ENCODE measurements at regions of chr12 and their contacts with region 1.

Region 1: DNA sequence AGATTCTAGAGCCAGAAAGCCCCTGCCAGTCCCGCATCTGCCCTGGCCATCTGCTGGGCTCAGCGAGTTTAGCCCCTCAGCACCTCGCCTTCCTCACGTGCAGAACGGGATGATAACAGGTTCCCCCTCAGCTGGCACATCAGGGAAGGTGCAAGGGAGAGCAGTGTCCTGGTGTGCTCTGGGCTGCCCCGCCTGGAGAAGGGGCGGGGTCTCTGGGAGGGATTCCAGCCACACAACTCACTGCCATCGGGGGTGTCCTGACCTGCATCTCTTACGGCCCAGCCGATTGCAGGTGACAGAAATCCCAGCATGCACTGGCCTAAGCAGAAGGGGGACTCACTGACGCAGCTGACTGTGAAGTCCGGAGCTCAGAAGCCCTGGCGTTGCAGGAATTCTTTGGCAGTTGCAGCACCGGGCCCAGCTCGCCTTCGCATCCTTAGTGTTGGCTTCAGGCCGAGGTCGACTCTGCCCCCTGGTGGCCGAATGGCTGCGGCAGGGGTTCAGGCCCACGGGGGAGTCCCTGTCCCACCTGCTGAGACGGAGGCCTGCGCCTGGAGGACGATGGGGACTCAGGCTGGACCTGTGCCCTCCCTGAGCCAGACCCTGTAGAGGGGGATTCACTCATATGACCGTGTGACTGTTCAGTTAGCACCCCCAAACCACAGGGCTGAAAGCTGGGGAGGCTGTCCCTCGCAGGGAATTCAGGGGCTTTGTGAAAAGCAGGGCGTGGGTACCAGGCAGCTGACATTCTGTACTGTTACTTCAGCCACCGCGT is 178.6 kb downstream of the ADGRD1 start:
- DNase-seq: peak; percentile 80
- H3K4me3 Mint-ChIP-seq: no peak overlapping the region
- H3K27ac Mint-ChIP-seq: no peak overlapping the region
- H3K4me1 Mint-ChIP-seq: no peaks in the 10 kb centered on the region
- H3K27me3 Mint-ChIP-seq: peaks cover 2% of the 10 kb centered on the region

Region 2: DNA sequence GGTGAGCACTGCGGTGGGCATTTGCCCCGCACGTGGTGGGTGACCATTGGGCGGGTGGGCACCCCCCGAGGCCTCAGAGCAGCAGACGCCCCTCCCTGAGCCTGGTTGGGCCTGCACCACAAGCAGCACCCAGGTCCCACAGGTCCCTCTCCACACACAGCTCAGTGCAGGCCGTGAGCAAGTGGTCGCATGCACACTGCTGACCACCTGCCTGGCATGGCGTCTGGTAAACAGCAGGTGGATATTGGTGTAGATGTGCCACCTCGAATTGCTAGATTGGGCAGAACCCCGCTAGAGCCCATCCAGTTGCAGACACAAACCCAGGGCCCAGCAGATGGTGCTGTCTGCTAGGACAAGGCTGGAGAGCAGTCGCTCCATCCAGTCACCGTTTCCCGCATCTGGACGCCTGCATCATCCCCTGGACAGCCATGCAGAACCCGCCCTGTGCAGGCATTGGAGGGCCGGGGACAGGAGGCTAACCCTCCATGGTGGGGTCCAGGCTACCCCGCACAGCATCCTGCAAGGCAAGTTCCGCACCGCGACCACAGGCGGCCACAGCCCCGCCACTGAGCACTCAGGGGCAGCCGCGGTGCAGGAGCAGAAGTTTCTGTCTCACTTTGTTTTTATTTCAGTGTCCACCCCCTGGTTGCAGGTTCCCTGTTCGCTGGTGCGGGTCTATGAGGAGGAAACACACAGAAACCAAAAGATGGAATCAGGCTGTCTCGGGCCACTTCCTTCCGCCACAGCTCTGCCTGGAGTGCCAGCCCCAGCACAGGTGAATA is 370.6 kb before region 1 on chr12:
- CTCF ChIA-PET with region 1: interaction called, 6 read pairs
- POLR2A ChIA-PET with region 1: no interaction called
- intact Hi-C with region 1: loop called (anchors 2 kb)
- DNase-seq: peak; percentile 79
- H3K4me3 Mint-ChIP-seq: peak overlapping the region; percentile 66
- H3K27ac Mint-ChIP-seq: no peak overlapping the region
- H3K4me1 Mint-ChIP-seq: peaks cover 3% of the 10 kb centered on the region
- H3K27me3 Mint-ChIP-seq: peaks cover 4% of the 10 kb centered on the region

Region 3: GRCh38 chr12:130826149-130826801 is 306.0 kb before region 1 on chr12:
- CTCF ChIA-PET with region 1: interaction called, 19 read pairs
- POLR2A ChIA-PET with region 1: no interaction called
- intact Hi-C with region 1: no loop called
- DNase-seq: peak; percentile 82
- H3K4me3 Mint-ChIP-seq: no peak overlapping the region
- H3K27ac Mint-ChIP-seq: no peak overlapping the region
- H3K4me1 Mint-ChIP-seq: peaks cover 13% of the 10 kb centered on the region
- H3K27me3 Mint-ChIP-seq: no peaks in the 10 kb centered on the region

Region 4: DNA sequence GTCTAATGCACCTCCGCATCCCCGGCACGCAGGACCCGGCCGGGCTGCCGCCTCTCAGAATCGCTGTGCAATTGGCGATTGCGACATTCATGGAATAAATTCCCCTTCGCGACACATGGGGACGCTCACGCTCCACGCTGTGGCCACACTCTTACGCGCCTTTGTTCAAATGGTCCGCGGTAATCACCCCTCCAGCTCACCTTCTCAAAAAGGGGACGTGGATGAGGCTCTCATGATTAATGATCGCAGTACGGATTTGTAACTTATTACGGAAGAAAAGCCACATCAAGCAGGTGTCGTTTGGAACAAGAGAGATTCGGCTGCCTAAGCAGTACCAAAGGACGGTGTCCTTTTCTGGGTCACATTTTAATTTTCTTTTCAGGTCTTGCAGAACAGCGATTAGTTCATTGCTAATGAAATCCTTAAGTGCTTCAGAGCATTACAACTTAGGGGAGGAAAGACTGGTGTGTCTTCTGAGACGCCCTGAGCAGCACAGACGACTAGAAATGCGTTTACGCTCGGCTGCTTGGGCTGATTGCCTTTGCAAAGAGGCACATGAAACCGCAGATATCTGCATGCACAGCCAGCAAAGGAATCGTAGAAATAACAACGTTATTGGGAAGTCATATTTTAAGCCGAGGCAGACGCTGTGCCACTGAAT is 215.9 kb before region 1 on chr12:
- CTCF ChIA-PET with region 1: interaction called, 11 read pairs
- POLR2A ChIA-PET with region 1: no interaction called
- intact Hi-C with region 1: loop called (anchors 10 kb)
- DNase-seq: peak; percentile 44
- H3K4me3 Mint-ChIP-seq: no peak overlapping the region
- H3K27ac Mint-ChIP-seq: no peak overlapping the region
- H3K4me1 Mint-ChIP-seq: no peaks in the 10 kb centered on the region
- H3K27me3 Mint-ChIP-seq: peaks cover 35% of the 10 kb centered on the region

Region 5: GRCh38 chr12:131046813-131047788 is 85.2 kb before region 1 on chr12:
- CTCF ChIA-PET with region 1: no interaction called
- POLR2A ChIA-PET with region 1: no interaction called
- intact Hi-C with region 1: no loop called
- DNase-seq: peak; percentile 16
- H3K4me3 Mint-ChIP-seq: no peak overlapping the region
- H3K27ac Mint-ChIP-seq: peak overlapping the region; percentile 10
- H3K4me1 Mint-ChIP-seq: no peaks in the 10 kb centered on the region
- H3K27me3 Mint-ChIP-seq: no peaks in the 10 kb centered on the region

Region 6: DNA sequence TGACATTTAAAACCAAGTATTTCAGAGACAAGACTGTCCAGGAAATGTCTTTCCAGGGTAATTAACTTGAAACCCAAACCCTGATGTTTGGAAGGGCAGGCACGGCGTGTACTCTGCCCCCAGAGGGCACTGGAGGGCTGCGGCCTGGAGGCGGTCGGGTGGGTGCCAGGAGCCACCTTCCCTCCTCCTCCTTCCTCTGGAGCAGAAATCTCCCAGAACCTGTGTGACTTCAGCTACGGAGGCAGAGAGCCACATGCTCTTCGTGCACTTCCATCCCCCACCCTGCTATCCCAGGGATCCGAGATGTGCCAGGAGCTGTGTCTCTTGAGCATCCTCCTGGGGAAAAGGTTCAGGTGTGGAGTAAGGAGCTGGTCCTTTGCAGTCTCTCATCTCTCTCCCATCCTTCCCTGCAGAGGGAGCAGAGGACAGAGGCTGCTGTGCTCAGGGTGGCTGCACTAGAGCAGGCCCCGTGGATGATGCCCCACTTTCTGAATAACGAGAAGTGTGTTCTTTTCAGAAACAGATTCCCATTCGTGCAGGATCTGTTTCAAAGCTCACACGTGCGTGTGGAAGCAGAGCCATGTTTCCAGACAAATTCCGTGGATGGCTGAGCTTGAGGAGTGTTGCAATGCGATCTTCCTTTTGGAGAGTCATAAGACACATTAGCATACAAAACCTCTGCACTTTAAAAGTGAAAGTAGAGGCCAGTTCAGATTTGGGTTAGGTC is 15.8 kb before region 1 on chr12:
- CTCF ChIA-PET with region 1: interaction called, 26 read pairs
- POLR2A ChIA-PET with region 1: no interaction called
- intact Hi-C with region 1: no loop called
- DNase-seq: no peak
- H3K4me3 Mint-ChIP-seq: no peak overlapping the region
- H3K27ac Mint-ChIP-seq: no peak overlapping the region
- H3K4me1 Mint-ChIP-seq: peaks cover 2% of the 10 kb centered on the region
- H3K27me3 Mint-ChIP-seq: peaks cover 17% of the 10 kb centered on the region

Region 7: DNA sequence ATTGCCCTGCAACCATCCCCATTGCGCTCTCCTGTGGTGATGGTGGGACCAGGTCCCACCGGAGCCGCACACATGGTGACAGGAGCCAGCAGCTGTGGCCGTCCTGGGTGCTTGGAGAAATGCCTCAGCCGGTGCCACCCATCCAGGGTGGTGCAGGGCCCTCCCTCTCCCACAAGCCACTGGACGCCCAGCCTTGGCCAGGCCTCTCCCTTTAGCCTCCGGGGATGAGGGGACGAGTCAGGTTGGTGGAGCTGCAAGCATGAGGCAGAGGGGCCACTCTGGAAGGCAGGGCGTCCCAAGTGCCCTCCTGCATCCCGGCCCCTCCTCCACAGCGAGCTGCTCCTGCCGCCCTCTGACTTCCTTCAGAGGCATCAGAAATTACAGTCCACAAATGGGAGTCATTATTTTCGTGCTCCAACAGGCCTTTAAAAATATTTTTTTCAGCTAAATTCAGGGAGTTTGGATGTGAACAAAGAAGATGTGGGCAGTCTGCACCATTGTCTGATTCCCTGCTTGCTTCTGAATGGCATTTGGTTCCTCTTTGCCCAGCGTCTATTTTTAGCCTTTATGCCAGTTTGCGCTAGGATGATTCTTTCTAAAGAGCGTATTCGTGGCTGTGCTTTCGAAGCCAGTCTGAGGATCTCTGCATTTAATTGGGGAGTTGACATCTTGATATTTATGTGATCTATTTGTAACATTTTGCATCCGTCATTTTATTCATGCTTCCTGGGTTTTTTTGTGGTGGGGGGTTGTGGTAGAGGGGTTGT is 10.8 kb after region 1 on chr12:
- CTCF ChIA-PET with region 1: interaction called, 10 read pairs
- POLR2A ChIA-PET with region 1: no interaction called
- intact Hi-C with region 1: no loop called
- DNase-seq: no peak
- H3K4me3 Mint-ChIP-seq: no peak overlapping the region
- H3K27ac Mint-ChIP-seq: no peak overlapping the region
- H3K4me1 Mint-ChIP-seq: no peaks in the 10 kb centered on the region
- H3K27me3 Mint-ChIP-seq: peaks cover 8% of the 10 kb centered on the region